HepG2 (cell line): ENCODE measurements at regions of chr19 and their contacts with region 1.

Region 1: DNA sequence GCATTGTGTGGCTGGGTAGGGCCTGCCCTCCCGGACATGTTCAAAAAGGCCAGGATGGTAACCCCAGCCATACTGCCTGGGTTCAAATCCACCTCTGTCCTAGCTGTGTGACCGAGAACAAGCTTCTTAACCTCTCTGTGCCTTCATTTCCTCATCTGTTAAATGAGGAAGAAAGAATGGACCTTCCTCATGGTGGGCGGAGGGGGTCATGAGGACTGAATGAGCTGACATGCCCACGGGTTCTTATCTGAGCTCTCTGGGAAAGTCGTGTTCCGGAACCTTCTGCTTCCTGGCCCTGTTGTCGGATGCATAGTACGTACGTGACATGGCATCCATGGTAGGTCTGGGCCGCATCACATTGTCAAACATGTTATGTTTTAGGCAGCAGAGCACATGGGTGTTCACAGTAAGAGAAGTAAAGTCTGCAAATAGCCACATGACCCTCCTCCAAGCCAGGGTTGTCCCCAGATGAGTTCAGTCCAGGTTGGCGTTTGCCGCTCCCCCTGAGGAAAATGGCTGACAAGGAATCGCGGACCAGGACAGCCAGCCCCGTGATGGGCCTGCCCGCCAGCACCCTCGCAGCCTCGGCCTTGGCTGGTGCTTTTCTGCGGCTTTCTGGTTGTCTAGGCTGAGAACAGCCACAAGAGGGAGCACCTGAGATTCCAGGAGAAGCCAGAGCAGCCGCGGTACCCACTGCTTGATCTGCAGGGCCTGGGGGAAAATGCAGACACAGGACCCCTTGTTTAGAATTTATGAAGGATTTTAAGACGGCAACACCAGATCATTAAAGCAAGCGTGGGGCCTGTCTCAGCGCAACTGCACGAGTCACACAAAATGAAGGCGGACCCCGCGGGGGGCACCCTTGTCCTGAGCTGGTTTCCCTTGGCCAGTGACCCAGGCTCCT is 2.4 kb upstream of the NTN5 start:
- DNase-seq: peak; percentile 77
- ATAC-seq: peak; percentile 75
- H3K4me3 ChIP-seq: no peak overlapping the region; a peak in 1 of 6 replicates
- H3K27ac ChIP-seq: no peak overlapping the region
- H3K4me1 ChIP-seq: peaks cover 25% of the 10 kb centered on the region
- H3K27me3 ChIP-seq: peaks cover 4 to 22% of the 10 kb centered on the region in 2 experiments; a peak in 4 of 5 replicates
- CTCF ChIP-seq: peak; percentile 94
- EP300 ChIP-seq: 0 out of 4 replicates have a peak, but pooled peaks of 1 of the 2 experiments have one; percentile 8
- POLR2A ChIP-seq: no peak
- RAD21 ChIP-seq: peak; percentile 91

Region 2: DNA sequence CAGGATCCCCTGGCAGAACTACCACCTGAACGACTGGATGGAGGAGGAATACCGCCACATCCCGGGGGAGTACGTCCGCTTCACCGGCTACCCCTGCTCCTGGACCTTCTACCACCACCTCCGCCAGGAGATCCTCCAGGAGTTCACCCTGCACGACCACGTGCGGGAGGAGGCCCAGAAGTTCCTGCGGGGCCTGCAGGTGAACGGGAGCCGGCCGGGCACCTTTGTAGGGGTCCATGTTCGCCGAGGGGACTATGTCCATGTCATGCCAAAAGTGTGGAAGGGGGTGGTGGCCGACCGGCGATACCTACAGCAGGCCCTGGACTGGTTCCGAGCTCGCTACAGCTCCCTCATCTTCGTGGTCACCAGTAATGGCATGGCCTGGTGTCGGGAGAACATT is 28.1 kb after region 1 on chr19:
- CTCF ChIA-PET with region 1: no interaction called
- POLR2A ChIA-PET with region 1: no interaction called
- in situ Hi-C with region 1: no loop called
- intact Hi-C with region 1: no loop called
- DNase-seq: no peak
- ATAC-seq: no peak
- H3K4me3 ChIP-seq: no peak overlapping the region
- H3K27ac ChIP-seq: no peak overlapping the region
- H3K4me1 ChIP-seq: 0 out of 2 replicates have a peak, but pooled peaks cover 6% of the 10 kb centered on the region
- H3K27me3 ChIP-seq: no peaks in the 10 kb centered on the region
- CTCF ChIP-seq: no peak
- EP300 ChIP-seq: no peak
- POLR2A ChIP-seq: no peak
- RAD21 ChIP-seq: no peak

Region 3: GRCh38 chr19:48713864-48714758 is 38.9 kb after region 1 on chr19:
- CTCF ChIA-PET with region 1: no interaction called
- POLR2A ChIA-PET with region 1: interaction called, 4 read pairs
- in situ Hi-C with region 1: no loop called
- intact Hi-C with region 1: loop called (anchors 5 kb)
- DNase-seq: peak; percentile 99
- ATAC-seq: peak; percentile 85
- H3K4me3 ChIP-seq: peak overlapping the region; percentile 81 to 94 (median 89)
- H3K27ac ChIP-seq: peak overlapping the region; percentile 91
- H3K4me1 ChIP-seq: peaks cover 48% of the 10 kb centered on the region
- H3K27me3 ChIP-seq: no peaks in the 10 kb centered on the region; a peak in 1 of 5 replicates
- CTCF ChIP-seq: peak; percentile 23; the same call in 1 of the 2 replicates
- EP300 ChIP-seq: no peak
- POLR2A ChIP-seq: peak in 1 of 2 experiments; percentile 80; a peak in 3 of 4 replicates
- RAD21 ChIP-seq: 0 out of 2 replicates have a peak, but pooled peaks have one; percentile 27

Region 4: DNA sequence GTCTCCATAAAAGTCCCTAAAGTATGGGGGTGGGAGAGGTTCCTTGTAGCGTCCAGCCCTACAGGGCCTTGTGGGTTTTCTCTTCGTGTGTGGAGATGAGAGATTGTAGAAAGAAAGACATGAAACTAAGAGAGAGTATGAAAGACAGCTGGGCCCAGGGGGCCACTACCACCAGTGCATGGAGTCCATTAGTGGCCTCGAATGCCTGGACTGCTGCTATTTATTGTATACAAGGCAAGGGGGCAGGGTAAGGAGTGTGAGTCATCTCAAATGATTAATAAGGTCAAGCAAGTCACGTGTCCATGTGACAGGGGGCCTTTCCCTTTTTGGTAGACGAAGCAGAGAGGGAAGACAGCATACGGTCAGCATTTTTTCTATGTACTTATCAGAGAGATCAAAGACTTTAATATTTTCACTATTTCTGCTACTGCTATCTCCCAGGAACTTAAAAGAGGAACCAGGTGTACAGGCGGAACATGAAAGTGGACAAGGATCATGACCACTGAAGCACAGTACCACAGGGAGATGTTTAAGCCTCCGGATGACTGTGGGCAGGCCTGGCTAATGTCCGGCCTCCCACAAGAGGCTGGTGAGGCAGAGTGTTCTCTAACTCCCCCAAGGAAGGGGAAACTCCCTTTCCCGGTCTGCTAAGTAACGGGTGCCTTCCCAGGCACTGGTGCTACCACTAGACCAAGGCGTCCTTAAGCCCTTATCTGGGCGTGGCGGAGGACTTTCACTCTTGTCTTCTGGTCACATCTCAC is 105.6 kb after region 1 on chr19:
- CTCF ChIA-PET with region 1: no interaction called
- POLR2A ChIA-PET with region 1: no interaction called
- in situ Hi-C with region 1: loop called (anchors 10 kb)
- intact Hi-C with region 1: loop called (anchors 1 kb)
- DNase-seq: peak; percentile 88
- ATAC-seq: peak; percentile 56
- H3K4me3 ChIP-seq: peak overlapping the region in 1 of 3 experiments; percentile 55; a peak in 2 of 6 replicates
- H3K27ac ChIP-seq: no peak overlapping the region
- H3K4me1 ChIP-seq: peaks cover 54% of the 10 kb centered on the region
- H3K27me3 ChIP-seq: no peaks in the 10 kb centered on the region; a peak in 1 of 5 replicates
- CTCF ChIP-seq: no peak
- EP300 ChIP-seq: peak in 1 of 2 experiments; percentile 15; a peak in 1 of 4 replicates
- POLR2A ChIP-seq: no peak
- RAD21 ChIP-seq: no peak

Region 5: GRCh38 chr19:48835734-48836088 is 160.5 kb after region 1 on chr19:
- CTCF ChIA-PET with region 1: no interaction called
- POLR2A ChIA-PET with region 1: no interaction called
- in situ Hi-C with region 1: loop called (anchors 10 kb)
- intact Hi-C with region 1: no loop called
- DNase-seq: peak; percentile 82
- ATAC-seq: peak; percentile 97
- H3K4me3 ChIP-seq: peak overlapping the region; percentile 39 to 64 (median 50); a peak in 5 of 6 replicates
- H3K27ac ChIP-seq: peak overlapping the region; percentile 25
- H3K4me1 ChIP-seq: peaks cover 19% of the 10 kb centered on the region
- H3K27me3 ChIP-seq: no peaks in the 10 kb centered on the region
- CTCF ChIP-seq: peak; percentile 97
- EP300 ChIP-seq: no peak
- POLR2A ChIP-seq: no peak
- RAD21 ChIP-seq: peak; percentile 92